ENCODE measurements at regions of chrX and their contacts with region 1.

Region 1: DNA sequence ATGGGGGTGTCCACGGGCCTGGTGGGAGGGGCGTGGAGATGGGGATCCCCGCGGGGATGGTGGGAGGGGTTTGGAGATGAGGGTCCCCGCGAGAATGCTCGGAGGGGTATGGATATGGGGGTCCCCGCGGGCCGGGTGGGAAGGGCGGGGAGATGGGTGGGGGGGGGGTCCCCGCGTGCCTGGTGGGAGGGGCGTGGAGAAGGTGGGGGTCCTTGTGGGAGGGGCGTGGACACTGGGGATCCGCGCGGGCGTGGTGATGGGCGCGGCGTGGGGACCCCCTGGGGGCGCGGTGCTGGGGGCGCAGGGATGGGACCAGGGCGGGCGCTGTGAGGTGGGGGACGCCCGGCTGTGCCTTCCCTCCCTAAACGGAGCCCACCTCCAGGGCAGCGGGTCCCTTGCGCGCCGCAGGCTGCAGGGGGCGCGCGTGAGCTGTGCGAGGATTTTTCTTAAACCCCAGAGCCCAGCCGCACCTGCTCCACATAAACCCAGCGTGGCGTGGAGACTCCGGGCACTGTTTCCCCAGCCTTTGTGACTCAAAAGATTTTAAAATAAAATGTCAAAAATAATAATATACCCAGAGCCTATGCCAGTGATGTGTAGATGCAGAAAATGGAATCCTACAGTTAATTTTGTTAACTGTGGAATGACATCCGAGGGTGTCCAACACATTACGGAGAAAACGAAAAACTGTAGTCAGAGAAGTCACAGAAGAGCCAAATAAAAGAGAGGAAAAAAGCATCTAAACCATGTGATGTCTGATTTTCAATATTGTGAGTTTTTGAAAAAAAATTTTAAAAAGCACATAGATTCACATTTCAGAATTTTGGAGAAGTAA is 1.5 kb upstream of the ASMTL start:
- DNase-seq: peak; percentile 86 to 94 (median 92)
- H3K4me3 ChIP-seq: peak overlapping the region; percentile 84
- H3K27ac ChIP-seq: peak overlapping the region; percentile 53 to 57
- H3K4me1 ChIP-seq: peaks cover 7% of the 10 kb centered on the region
- H3K27me3 ChIP-seq: no peaks in the 10 kb centered on the region
- CTCF ChIP-seq: peak; percentile 85 to 96 (median 91)
- EP300 ChIP-seq: no peak
- POLR2A ChIP-seq: no peak

Region 2: GRCh38 chrX:1391707-1392375 is 62.3 kb before region 1 on chrX and contains the start of gene SLC25A6:
- intact Hi-C with region 1: loop called in 1 of 4 experiments (anchors 1 kb)
- DNase-seq: peak; percentile 99 to 100 (median 99)
- H3K4me3 ChIP-seq: peak within 1 kb of the TSS; percentile 98
- H3K27ac ChIP-seq: peak within 1 kb of the TSS; percentile 98 to 100
- H3K4me1 ChIP-seq: peaks cover 16% of the 10 kb centered on the region
- H3K27me3 ChIP-seq: no peaks in the 10 kb centered on the region
- CTCF ChIP-seq: peak in 2 of 3 donors; percentile 32 to 53
- EP300 ChIP-seq: peak; percentile 8
- POLR2A ChIP-seq: peak; percentile 91
- total RNA-seq, gene SLC25A6: 473 to 630 (median 519) TPM

Region 3: GRCh38 chrX:1591102-1591900 is 137.1 kb after region 1 on chrX and contains the start of gene AKAP17A:
- intact Hi-C with region 1: loop called in 2 of 4 experiments (anchors 5 to 10 kb)
- DNase-seq: peak; percentile 95 to 99 (median 97)
- H3K4me3 ChIP-seq: peak within 1 kb of the TSS; percentile 72
- H3K27ac ChIP-seq: peak within 1 kb of the TSS; percentile 72 to 86
- H3K4me1 ChIP-seq: peaks cover 10% of the 10 kb centered on the region
- H3K27me3 ChIP-seq: no peaks in the 10 kb centered on the region
- CTCF ChIP-seq: peak in 1 of 3 donors; percentile 33
- EP300 ChIP-seq: no peak
- POLR2A ChIP-seq: peak; percentile 72
- total RNA-seq, gene AKAP17A: 51.7 to 76.7 (median 63.3) TPM

Region 4: DNA sequence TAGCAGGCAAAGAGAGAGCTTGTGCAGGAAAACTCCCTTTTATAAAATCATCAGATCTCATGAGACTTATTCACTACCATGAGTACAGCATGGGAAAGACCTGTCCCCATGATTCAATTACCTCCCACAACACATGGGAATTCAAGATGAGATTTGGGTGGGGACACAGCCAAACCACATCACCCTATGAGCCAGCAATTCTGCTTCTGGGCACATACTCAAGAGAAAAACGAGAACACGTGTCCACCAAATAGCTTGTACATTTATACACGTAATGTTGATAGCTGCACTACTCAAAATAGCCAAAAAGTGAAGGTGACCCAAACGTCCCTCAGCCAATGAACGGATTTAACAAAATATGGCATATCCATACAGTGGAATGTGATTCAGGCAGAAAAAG is 1141.1 kb after region 1 on chrX:
- intact Hi-C with region 1: loop called in 2 of 4 experiments (anchors 10 kb)
- DNase-seq: no peak
- H3K4me3 ChIP-seq: no peak overlapping the region
- H3K27ac ChIP-seq: no peak overlapping the region
- H3K4me1 ChIP-seq: no peaks in the 10 kb centered on the region
- H3K27me3 ChIP-seq: no peaks in the 10 kb centered on the region
- CTCF ChIP-seq: no peak
- EP300 ChIP-seq: no peak
- POLR2A ChIP-seq: no peak

Region 5: DNA sequence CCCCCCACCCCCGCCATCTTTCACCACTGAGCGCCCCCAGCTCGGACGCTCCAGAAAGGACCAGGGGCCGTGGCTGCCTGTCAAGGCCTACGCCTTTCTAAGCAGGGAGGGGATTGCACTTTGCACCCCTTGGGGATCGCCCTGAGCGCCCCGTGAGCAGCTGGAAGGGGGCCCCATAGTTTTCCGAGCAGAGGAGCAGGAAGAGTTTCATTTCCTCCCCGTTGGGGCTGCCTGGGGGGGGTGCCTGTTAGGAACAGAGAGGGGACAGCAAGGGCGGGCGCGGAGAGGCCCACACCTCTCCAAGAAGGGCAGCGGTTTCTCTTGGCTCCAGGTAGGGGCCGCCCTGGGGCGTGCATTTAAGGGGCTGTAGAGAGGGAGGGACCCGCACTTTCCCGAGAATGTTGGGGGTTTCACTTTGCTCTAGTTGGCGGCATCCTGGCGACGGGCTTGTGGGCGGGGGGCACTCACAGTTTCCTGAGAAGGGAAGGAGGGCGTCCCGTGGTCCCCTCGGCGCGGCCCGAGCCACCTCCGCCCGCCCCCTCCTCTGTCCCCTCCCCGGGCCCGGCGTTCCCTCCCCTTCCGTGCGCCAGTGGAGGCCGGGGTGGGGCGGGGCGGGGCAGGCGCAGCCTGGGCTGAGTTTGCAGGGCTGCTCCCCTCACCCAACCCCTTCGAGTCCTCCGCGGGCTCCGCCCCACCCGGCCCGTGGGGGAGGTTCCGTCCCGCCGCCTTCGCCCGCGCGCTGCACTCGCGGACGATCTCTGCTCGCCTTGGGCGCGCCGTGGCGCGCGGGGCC is 1154.7 kb after region 1 on chrX:
- intact Hi-C with region 1: loop called in 1 of 4 experiments (anchors 10 kb)
- DNase-seq: peak; percentile 81 to 88 (median 85)
- H3K4me3 ChIP-seq: peak overlapping the region; percentile 60
- H3K27ac ChIP-seq: peak overlapping the region; percentile 27 to 63
- H3K4me1 ChIP-seq: no peaks in the 10 kb centered on the region
- H3K27me3 ChIP-seq: no peaks in the 10 kb centered on the region
- CTCF ChIP-seq: no peak
- EP300 ChIP-seq: no peak
- POLR2A ChIP-seq: no peak

Measured in ovary (tissue), 10 donors.